Left ventricle myocardium superior (tissue), 1 donor: ENCODE measurements at regions of chrX and their contacts with region 1.

Region 1: GRCh38 chrX:103214870-103215424 is at the start of gene BEX4:
- DNase-seq: peak; percentile 89
- ATAC-seq: peak; percentile 100
- total RNA-seq, gene BEX4: 29.6 TPM

Region 2: GRCh38 chrX:103248553-103248952 is 33.6 kb after region 1 on chrX:
- intact Hi-C with region 1: loop called (anchors 5 kb)
- DNase-seq: no peak
- ATAC-seq: no peak

Region 3: GRCh38 chrX:103756736-103757135 is 541.8 kb after region 1 on chrX:
- intact Hi-C with region 1: no loop called
- DNase-seq: no peak
- ATAC-seq: no peak